Activated T-helper 1 cell treated with anti-CD3 and anti-CD28 coated beads, Interleukin-12 subunit alpha, Interleukin-12 subunit beta, Interleukin-2, Interleukin-4 antibody, amounts not matched to agents 30 ng/mL and 10 ng/mL and 1 ng/mL, durations not matched to agents 14 hours and 24 hours and 36 hours (primary cell): ENCODE measurements at regions of chr22 and their contacts with region 1.

Region 1: GRCh38 chr22:30591588-30592359 is at the start of gene PES1:
- DNase-seq: peak; percentile 93
- H3K4me3 Mint-ChIP-seq: no peak within 1 kb of the TSS
- H3K27ac Mint-ChIP-seq: no peak within 1 kb of the TSS
- H3K4me1 Mint-ChIP-seq: no peaks in the 10 kb centered on the region
- H3K27me3 Mint-ChIP-seq: peaks cover 12% of the 10 kb centered on the region
- total RNA-seq, gene PES1: 168 and 169 TPM in 2 replicates

Region 2: GRCh38 chr22:29603358-29604075 is 988.3 kb before region 1 on chr22 and contains the start of gene NF2:
- intact Hi-C with region 1: loop called (anchors 10 kb)
- DNase-seq: peak; percentile 99
- H3K4me3 Mint-ChIP-seq: peak within 1 kb of the TSS; percentile 96
- H3K27ac Mint-ChIP-seq: peak within 1 kb of the TSS; percentile 98
- H3K4me1 Mint-ChIP-seq: peaks cover 23% of the 10 kb centered on the region
- H3K27me3 Mint-ChIP-seq: no peaks in the 10 kb centered on the region
- total RNA-seq, gene NF2: 65.7 and 66.1 TPM in 2 replicates

Region 3: DNA sequence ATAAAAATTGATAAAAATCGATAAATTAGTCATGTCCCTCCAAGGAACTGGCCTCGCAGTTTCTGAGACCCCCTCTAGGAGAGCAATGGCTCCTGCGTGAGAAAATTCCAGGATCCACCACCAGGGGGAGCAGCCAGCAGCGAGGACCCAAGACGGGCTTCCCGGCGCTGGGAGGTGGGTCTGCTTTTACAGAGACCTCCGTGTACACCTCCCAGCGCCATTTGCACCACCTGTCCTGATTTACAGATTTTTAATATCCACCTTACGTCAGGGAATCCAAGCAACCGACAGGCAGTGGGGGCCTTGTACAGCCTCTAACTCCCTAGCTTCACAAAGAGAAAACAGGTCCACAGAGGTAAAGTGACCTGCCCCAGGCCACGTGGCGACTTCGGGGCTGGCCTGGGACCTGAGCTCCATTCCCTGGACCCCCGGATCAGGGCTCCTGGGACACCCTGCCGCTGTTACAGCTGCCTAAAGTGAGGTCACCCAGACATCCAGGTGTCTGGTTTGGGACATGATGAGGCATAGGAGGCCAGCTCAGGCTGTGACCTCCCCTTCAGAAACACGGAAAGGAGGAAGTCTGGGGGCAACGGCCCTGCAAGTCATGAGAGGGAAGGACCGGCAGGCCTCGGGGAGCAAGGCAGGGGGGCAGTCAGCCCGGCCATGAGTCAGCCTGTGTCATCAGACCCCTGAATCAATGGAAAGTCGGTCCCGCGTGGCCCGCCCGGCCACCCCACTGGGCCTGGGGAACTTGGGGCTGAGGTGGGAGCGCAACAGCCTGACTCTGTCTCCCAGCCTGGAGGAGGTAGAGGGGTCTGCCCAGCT is 328.6 kb before region 1 on chr22:
- intact Hi-C with region 1: loop called (anchors 5 kb)
- DNase-seq: peak; percentile 67
- H3K4me3 Mint-ChIP-seq: peak overlapping the region; percentile 95
- H3K27ac Mint-ChIP-seq: peak overlapping the region; percentile 94
- H3K4me1 Mint-ChIP-seq: peaks cover 64% of the 10 kb centered on the region
- H3K27me3 Mint-ChIP-seq: no peaks in the 10 kb centered on the region

Region 4: GRCh38 chr22:30326706-30327362 is 264.9 kb before region 1 on chr22 and contains the start of gene TBC1D10A:
- intact Hi-C with region 1: no loop called
- DNase-seq: peak; percentile 90
- H3K4me3 Mint-ChIP-seq: peak within 1 kb of the TSS; percentile 89
- H3K27ac Mint-ChIP-seq: peak within 1 kb of the TSS; percentile 60
- H3K4me1 Mint-ChIP-seq: peaks cover 48% of the 10 kb centered on the region
- H3K27me3 Mint-ChIP-seq: no peaks in the 10 kb centered on the region
- total RNA-seq, gene TBC1D10A: 17.3 and 24.9 TPM in 2 replicates

Region 5: GRCh38 chr22:30423982-30424963 is 167.5 kb before region 1 on chr22:
- intact Hi-C with region 1: loop called (anchors 1 kb)
- DNase-seq: peak; percentile 98
- H3K4me3 Mint-ChIP-seq: peak overlapping the region; percentile 98
- H3K27ac Mint-ChIP-seq: peak overlapping the region; percentile 99
- H3K4me1 Mint-ChIP-seq: peaks cover 66% of the 10 kb centered on the region
- H3K27me3 Mint-ChIP-seq: no peaks in the 10 kb centered on the region

Region 6: DNA sequence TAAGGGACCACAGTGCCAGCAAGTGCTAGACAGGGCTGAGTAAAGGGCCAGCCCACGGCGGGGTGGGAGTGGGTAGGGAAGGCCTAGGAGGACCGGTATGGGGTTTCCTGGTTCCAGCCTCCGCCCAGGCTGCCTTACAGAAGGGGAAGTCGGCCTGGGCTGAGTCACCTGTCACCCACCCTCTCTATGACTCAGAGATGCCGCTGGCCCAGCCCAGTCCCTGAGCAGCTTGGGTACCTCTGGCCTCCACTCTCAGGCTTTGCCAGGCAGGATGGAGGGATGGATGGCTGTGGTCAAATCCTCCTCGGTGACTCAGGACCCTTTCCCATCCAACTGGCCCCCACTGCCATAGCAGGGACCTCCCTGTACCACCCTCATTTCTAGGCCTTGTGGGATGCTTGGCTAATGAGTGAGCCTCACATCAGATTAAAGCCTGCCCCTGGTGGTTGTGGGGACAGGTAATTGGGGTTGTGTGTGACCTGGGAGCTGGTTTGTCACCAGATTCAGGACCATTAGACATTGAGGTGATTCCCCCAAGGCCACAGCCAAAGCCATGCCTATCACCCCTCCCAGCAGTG is 57.7 kb after region 1 on chr22:
- intact Hi-C with region 1: no loop called
- DNase-seq: peak; percentile 72
- H3K4me3 Mint-ChIP-seq: peak overlapping the region; percentile 45
- H3K27ac Mint-ChIP-seq: peak overlapping the region; percentile 89
- H3K4me1 Mint-ChIP-seq: peaks cover 47% of the 10 kb centered on the region
- H3K27me3 Mint-ChIP-seq: no peaks in the 10 kb centered on the region

Region 7: DNA sequence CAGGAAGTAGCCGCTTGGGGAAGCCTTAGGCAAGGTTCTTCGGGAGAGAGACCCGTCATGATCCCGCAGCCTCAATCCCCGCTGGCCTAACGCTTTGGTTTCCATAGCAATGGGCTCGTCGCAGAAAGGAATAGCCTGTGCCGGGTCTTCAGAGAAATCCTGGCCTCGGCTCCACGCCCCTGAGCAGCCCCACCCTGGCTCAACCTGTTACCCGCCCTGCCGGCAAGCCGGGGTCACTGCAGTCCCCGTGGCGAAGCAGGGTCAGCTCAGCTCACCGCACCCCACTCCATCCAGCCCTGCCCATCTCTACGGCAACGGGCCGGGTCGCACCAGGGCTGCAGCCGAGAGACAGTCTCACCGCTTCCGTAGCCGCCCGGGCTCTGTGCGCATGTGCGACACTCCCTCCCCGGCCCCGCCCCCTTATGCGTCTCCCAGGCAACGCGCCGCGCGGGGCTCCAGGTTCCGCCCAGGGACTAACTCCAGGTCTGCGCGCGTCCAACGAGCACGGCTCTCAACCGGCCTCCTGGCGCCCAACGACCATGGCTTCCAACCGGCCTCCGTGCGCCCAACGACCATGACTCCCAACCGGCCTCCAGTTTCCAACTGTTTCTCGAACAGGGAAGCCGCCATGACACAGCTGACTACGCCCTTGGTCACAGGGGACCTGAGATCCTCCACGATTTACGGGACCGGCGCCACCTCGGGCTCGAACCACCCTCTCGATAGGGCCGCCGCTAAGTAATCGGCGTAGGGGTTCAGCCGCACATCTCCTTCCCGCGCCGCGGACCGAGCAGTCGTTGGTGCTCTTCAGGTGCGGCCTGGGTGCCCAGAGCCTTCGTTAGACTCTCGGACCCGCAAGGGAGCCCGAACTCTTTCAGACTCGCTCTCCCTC is 76.0 kb after region 1 on chr22 and contains the start of gene DUSP18:
- intact Hi-C with region 1: loop called (anchors 1 kb)
- DNase-seq: peak; percentile 92
- H3K4me3 Mint-ChIP-seq: peak within 1 kb of the TSS; percentile 93
- H3K27ac Mint-ChIP-seq: peak within 1 kb of the TSS; percentile 83
- H3K4me1 Mint-ChIP-seq: peaks cover 32% of the 10 kb centered on the region
- H3K27me3 Mint-ChIP-seq: peaks cover 7% of the 10 kb centered on the region
- total RNA-seq, gene DUSP18: 9.6 and 9.8 TPM in 2 replicates

Region 8: GRCh38 chr22:31290494-31291471 is 699.0 kb after region 1 on chr22:
- intact Hi-C with region 1: loop called (anchors 5 kb)
- DNase-seq: peak; percentile 93
- H3K4me3 Mint-ChIP-seq: peak overlapping the region; percentile 96
- H3K27ac Mint-ChIP-seq: peak overlapping the region; percentile 99
- H3K4me1 Mint-ChIP-seq: peaks cover 77% of the 10 kb centered on the region
- H3K27me3 Mint-ChIP-seq: no peaks in the 10 kb centered on the region